Calu3 (cell line): ENCODE measurements at regions of chr4 and their contacts with region 1.

Region 1: GRCh38 chr4:111943795-111944203 is 201.5 kb upstream of the FAM241A start:
- DNase-seq: peak; percentile 58
- H3K4me3 Mint-ChIP-seq: no peak overlapping the region
- H3K27ac Mint-ChIP-seq: no peak overlapping the region
- H3K4me1 Mint-ChIP-seq: peaks cover 8% of the 10 kb centered on the region
- H3K27me3 Mint-ChIP-seq: no peaks in the 10 kb centered on the region
- CTCF ChIP-seq: peak; percentile 48

Region 2: GRCh38 chr4:112031712-112032328 is 88.0 kb after region 1 on chr4:
- CTCF ChIA-PET with region 1: interaction called, 16 read pairs
- intact Hi-C with region 1: loop called (anchors 1 kb)
- DNase-seq: peak; percentile 37
- H3K4me3 Mint-ChIP-seq: no peak overlapping the region
- H3K27ac Mint-ChIP-seq: no peak overlapping the region
- H3K4me1 Mint-ChIP-seq: no peaks in the 10 kb centered on the region
- H3K27me3 Mint-ChIP-seq: no peaks in the 10 kb centered on the region
- CTCF ChIP-seq: peak; percentile 43